Tibial artery (tissue), 4 donors: ENCODE measurements at regions of chr9 and their contacts with region 1.

Region 1: GRCh38 chr9:108565651-108566378 is 290.0 kb downstream of the ACTL7B start:
- DNase-seq: peak; percentile 61 to 68
- H3K4me3 ChIP-seq: no peak overlapping the region
- H3K27ac ChIP-seq: no peak overlapping the region
- H3K4me1 ChIP-seq: peaks cover 0 to 3% (median 0%) of the 10 kb centered on the region in 4 donors
- H3K27me3 ChIP-seq: no peaks in the 10 kb centered on the region
- CTCF ChIP-seq: peak; percentile 80 to 82

Region 2: DNA sequence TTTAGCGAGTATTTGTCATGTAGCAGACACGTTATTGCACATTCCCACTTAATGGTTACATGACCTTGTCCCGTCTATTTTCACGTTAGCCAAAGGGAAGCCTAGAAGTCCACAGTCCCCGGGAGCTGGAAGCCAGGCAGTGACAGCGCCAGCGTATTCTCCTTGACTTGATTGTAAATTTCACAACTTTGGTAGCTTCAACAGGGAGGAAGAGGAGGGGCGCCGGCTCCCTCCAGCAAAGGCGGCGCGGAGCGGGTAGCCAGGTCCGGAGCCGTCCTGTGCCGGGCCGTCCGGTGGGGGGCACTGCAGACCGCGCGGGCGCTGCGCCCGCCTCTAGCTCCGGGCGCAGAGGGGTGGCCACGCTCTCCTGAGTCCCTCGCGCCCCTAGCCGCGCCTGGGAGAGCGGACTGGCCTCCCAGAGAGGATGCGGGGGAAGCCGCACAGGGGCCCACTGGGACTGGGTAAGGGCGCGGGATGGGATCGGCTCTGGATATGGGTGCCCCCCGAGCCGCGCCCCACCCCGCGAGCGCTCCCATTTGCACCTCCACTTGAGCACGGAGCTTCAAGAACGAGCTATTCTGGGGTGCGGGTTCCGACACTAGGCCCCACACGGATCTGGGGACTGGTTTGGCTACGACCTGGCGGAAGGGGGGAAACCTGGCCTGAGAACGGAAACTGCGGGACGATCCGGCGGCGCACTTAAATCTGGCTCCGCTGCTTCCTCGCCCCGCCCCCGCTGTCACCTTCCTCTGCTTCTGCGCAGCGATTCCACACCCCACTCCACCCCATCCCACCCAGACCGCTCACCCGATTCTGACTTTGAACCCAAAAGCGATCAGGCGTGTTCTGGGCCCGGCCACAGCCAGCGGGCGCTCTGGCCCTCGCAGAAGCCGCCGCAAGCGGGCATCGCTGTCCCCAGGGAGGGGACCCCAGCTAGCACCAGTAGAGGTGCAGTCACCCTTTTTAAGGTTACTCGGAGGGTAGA is 1100.1 kb before region 1 on chr9:
- intact Hi-C with region 1: loop called (anchors 5 kb)
- DNase-seq: peak; percentile 78 to 85
- H3K4me3 ChIP-seq: peak overlapping the region; percentile 47 to 61
- H3K27ac ChIP-seq: peak overlapping the region; percentile 9 to 13
- H3K4me1 ChIP-seq: peaks cover 0 to 14% (median 8%) of the 10 kb centered on the region in 4 donors
- H3K27me3 ChIP-seq: peaks cover 0 to 3% of the 10 kb centered on the region in 2 donors
- CTCF ChIP-seq: peak; percentile 85 to 94

Region 3: GRCh38 chr9:108400297-108401064 is 165.3 kb before region 1 on chr9:
- intact Hi-C with region 1: loop called (anchors 10 kb)
- DNase-seq: no peak
- H3K4me3 ChIP-seq: no peak overlapping the region
- H3K27ac ChIP-seq: no peak overlapping the region
- H3K4me1 ChIP-seq: no peaks in the 10 kb centered on the region
- H3K27me3 ChIP-seq: no peaks in the 10 kb centered on the region
- CTCF ChIP-seq: no peak

Region 4: DNA sequence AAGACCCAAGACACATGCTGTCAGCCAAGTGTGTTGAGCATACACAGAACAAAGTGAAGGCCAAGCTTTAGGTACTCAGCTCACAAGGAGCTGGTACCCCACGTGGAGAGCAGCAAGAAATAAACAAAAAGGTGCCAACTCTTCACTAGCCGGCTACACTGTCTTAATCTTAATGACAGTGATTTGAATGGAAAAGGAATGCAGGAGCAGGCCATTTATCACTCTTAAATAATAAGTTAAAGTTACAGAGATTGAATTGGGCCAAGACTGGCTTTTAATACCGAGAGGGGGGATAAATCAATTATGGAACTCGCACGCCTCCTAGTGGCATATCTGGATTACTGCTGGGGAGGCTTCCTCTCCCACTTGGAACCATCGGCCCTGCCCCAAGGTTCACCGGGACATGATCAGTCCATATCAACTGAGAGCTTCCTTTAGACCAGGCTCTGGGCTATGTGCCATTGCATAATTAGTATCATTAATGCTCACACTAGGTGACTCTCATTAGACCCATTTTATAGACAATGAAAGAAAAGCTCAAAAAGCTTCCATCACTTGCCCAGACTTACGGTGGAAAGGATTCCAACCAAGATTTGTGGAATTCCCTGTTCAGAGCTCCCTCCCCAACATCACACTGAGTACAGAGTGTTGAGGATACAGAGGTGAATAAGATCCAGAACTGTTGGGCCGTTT is 196.0 kb after region 1 on chr9:
- intact Hi-C with region 1: loop called (anchors 10 kb)
- DNase-seq: peak in 1 of 2 donors; percentile 64
- H3K4me3 ChIP-seq: no peak overlapping the region
- H3K27ac ChIP-seq: no peak overlapping the region
- H3K4me1 ChIP-seq: no peaks in the 10 kb centered on the region
- H3K27me3 ChIP-seq: no peaks in the 10 kb centered on the region
- CTCF ChIP-seq: peak; percentile 79 to 82